CD4-positive, alpha-beta T cell (primary cell): ENCODE measurements at regions of chr11 and their contacts with region 1.

Region 1: DNA sequence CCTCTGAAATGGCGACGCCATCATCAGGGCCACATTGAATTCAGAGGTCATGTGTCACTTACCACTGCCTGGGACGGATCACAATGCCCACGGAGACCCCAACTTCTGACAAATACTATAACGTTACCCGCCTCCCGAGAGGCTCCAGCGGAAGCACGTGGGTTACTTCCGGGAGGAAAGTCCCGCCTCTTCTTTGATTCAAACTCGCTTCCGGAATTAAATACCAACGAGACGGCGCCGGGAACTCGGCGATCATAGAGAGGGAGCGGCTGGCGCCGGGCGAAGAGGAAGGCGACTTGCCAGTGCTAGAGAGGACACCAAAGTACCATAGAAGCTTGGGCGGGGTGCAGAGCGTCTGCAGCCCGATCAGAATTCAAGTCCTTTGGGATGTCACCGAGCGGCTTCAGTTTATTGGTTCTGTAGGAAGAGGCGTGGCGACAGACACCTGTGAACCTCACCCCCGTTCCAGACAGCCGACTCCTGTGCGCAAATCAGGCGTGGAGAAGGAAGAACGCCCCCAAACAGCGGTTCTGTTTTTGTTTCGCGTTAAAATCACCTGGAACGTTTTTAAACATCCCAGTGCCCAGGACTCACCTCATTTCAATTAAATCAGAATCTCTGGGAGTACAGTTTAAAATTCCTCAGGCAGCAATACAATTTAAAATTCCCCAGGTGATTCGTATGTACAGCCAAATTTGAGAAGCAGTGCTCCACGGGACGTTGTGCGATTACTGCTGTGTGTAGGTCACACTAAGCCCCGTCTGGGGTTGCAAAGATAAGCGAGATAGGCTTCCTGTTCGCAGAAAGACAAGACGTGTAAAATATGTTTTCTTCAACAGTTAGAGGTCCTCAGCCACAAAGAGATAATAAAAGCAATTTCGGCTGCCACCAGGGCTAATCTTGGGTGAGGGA is at the start of gene TIMM10:
- DNase-seq: peak; percentile 82 to 99 (median 91)
- ATAC-seq: peak; percentile 91
- H3K4me3 ChIP-seq: peak within 1 kb of the TSS; percentile 85
- H3K4me3 Mint-ChIP-seq: peak within 1 kb of the TSS; percentile 89
- H3K27ac ChIP-seq: peak within 1 kb of the TSS; percentile 78 to 91
- H3K27ac Mint-ChIP-seq: peak within 1 kb of the TSS; percentile 90
- H3K4me1 ChIP-seq: peaks cover 24% of the 10 kb centered on the region
- H3K4me1 Mint-ChIP-seq: peaks cover 25% of the 10 kb centered on the region
- H3K27me3 ChIP-seq: no peaks in the 10 kb centered on the region
- H3K27me3 Mint-ChIP-seq: no peaks in the 10 kb centered on the region
- CTCF ChIP-seq: no peak
- total RNA-seq, gene TIMM10: 28.0 TPM

Region 2: DNA sequence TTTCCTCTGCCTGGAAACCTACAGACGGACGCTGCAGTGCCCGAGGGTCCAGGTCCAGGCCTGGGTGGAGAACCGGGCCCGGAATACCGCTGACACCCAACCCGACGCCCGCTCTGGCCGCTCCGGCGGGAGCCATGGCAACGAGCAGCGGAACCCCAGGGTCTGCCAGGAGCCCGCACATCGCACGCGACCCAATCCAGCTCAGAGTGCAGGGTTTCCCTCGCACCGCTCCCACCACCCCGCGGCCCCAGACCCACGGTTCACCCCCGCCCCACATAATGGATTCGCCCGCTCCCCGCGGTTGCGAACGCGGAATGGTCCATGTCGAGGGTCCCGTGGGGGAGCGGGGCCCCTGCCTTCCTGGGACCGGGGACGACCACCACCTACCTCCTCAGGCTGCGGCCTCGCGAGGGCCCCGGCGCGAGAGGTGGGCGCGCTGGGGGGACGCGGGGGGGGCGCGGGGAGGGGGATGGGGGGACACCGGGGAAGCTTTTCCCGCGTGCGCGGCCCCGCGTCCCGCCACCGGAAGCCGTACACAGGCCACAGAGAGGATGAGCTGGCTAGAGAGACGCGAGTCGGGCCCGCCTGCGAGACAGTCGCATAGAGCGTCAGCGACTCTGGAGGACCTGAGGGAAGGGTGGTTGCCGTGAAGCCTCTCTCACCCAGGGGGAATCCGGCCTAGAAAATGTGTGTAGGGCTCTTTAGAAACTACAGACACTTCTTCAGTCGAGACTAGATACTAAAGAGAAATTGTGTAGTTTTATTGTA is 195.3 kb before region 1 on chr11 and contains the start of gene SSRP1:
- CTCF ChIA-PET with region 1: interaction called, 3 read pairs
- POLR2A ChIA-PET with region 1: interaction called, 3 read pairs
- intact Hi-C with region 1: loop called in 1 of 2 experiments (anchors 2 kb)
- DNase-seq: peak; percentile 77 to 95 (median 86)
- ATAC-seq: peak; percentile 97
- H3K4me3 ChIP-seq: peak within 1 kb of the TSS; percentile 80
- H3K4me3 Mint-ChIP-seq: peak within 1 kb of the TSS; percentile 89
- H3K27ac ChIP-seq: peak within 1 kb of the TSS; percentile 72 to 85
- H3K27ac Mint-ChIP-seq: peak within 1 kb of the TSS; percentile 96
- H3K4me1 ChIP-seq: peaks cover 29% of the 10 kb centered on the region
- H3K4me1 Mint-ChIP-seq: peaks cover 33% of the 10 kb centered on the region
- H3K27me3 ChIP-seq: no peaks in the 10 kb centered on the region
- H3K27me3 Mint-ChIP-seq: no peaks in the 10 kb centered on the region
- CTCF ChIP-seq: no peak
- total RNA-seq, gene SSRP1: 36.7 to 41.2 TPM

Region 3: GRCh38 chr11:57444362-57445121 is 86.3 kb before region 1 on chr11:
- CTCF ChIA-PET with region 1: no interaction called
- POLR2A ChIA-PET with region 1: no interaction called
- intact Hi-C with region 1: no loop called
- DNase-seq: no peak
- ATAC-seq: no peak
- H3K4me3 ChIP-seq: no peak overlapping the region
- H3K4me3 Mint-ChIP-seq: no peak overlapping the region
- H3K27ac ChIP-seq: no peak overlapping the region
- H3K27ac Mint-ChIP-seq: no peak overlapping the region
- H3K4me1 ChIP-seq: no peaks in the 10 kb centered on the region
- H3K4me1 Mint-ChIP-seq: no peaks in the 10 kb centered on the region
- H3K27me3 ChIP-seq: no peaks in the 10 kb centered on the region
- H3K27me3 Mint-ChIP-seq: peaks cover 20% of the 10 kb centered on the region
- CTCF ChIP-seq: no peak

Region 4: GRCh38 chr11:57456960-57457642 is 73.8 kb before region 1 on chr11:
- CTCF ChIA-PET with region 1: interaction called, 26 read pairs
- POLR2A ChIA-PET with region 1: interaction called, 14 read pairs
- intact Hi-C with region 1: loop called (anchors 1 kb)
- DNase-seq: peak; percentile 50 to 85 (median 66)
- ATAC-seq: peak; percentile 62
- H3K4me3 ChIP-seq: no peak overlapping the region
- H3K4me3 Mint-ChIP-seq: peak overlapping the region; percentile 83
- H3K27ac ChIP-seq: no peak overlapping the region
- H3K27ac Mint-ChIP-seq: no peak overlapping the region
- H3K4me1 ChIP-seq: peaks cover 42% of the 10 kb centered on the region
- H3K4me1 Mint-ChIP-seq: peaks cover 32% of the 10 kb centered on the region
- H3K27me3 ChIP-seq: peaks cover 33 to 36% of the 10 kb centered on the region in 2 experiments
- H3K27me3 Mint-ChIP-seq: peaks cover 51% of the 10 kb centered on the region
- CTCF ChIP-seq: peak; percentile 98

Region 5: DNA sequence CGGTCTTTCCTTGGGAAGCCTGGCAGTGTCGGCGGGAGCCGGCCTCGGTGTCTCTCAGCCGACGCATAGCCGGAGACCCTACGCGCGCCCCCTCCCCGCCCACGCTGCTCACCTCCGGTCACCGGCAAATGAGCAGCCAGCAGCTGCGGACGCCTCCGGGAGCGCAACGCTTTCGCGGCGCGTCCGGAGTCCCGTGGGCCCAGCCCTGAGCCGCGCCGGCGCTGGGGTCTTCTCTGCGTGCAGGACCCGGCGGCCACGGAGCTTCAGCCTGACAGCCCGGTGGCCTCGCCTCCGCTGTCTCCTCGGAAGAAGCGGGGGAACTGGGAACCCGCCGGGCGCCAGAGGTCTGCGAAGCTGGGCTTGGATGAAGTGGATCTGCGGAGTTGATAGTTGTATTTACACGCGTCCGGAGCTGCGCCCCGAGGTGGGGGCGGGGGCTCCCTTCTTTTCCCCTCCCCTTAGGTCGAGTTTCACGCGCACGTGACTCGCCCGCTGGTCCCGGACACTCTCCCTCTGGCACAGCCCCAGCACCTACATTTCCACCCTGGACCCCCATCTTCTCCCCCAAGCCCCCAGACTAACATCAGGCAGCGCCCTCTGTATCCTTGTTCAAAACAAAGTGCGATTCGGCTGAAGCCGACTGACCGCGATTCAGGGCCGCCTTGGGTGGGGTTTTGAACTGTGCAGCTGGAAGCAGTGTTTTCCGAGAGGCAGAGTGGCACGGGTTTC is 15.4 kb before region 1 on chr11 and contains the start of gene SLC43A1:
- CTCF ChIA-PET with region 1: interaction called, 19 read pairs
- POLR2A ChIA-PET with region 1: interaction called, 4 read pairs
- intact Hi-C with region 1: no loop called
- DNase-seq: peak in 4 of 14 experiments; percentile 16 to 38 (median 33)
- ATAC-seq: peak; percentile 20
- H3K4me3 ChIP-seq: peak within 1 kb of the TSS; percentile 95
- H3K4me3 Mint-ChIP-seq: peak within 1 kb of the TSS; percentile 98
- H3K27ac ChIP-seq: no peak within 1 kb of the TSS
- H3K27ac Mint-ChIP-seq: peak within 1 kb of the TSS; percentile 42
- H3K4me1 ChIP-seq: peaks cover 32% of the 10 kb centered on the region
- H3K4me1 Mint-ChIP-seq: peaks cover 30% of the 10 kb centered on the region
- H3K27me3 ChIP-seq: no peaks in the 10 kb centered on the region
- H3K27me3 Mint-ChIP-seq: no peaks in the 10 kb centered on the region
- CTCF ChIP-seq: no peak
- total RNA-seq, gene SLC43A1: 3.1 to 4.2 TPM

Region 6: DNA sequence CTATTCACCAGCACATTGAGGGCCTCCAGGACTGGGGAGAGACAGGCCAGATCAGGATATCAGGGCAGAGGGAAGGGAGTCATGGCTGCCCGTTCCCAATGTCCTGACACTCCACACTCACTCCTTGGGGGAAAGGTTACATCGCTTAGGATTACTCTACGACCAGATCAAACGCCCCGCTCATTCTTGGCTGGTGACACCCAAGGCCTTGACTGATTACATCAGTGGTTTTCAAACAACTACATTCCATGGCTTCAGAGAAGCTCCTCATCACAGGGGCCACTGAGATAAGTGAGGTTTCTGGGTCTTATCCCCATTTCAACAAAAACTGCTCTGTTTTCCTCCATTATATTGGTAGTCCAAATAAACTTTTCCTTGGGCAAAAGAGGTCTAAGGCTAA is 21.6 kb after region 1 on chr11:
- CTCF ChIA-PET with region 1: no interaction called
- POLR2A ChIA-PET with region 1: no interaction called
- intact Hi-C with region 1: no loop called
- DNase-seq: no peak
- ATAC-seq: no peak
- H3K4me3 ChIP-seq: no peak overlapping the region
- H3K4me3 Mint-ChIP-seq: no peak overlapping the region
- H3K27ac ChIP-seq: no peak overlapping the region
- H3K27ac Mint-ChIP-seq: no peak overlapping the region
- H3K4me1 ChIP-seq: no peaks in the 10 kb centered on the region
- H3K4me1 Mint-ChIP-seq: peaks cover 6% of the 10 kb centered on the region
- H3K27me3 ChIP-seq: no peaks in the 10 kb centered on the region
- H3K27me3 Mint-ChIP-seq: no peaks in the 10 kb centered on the region
- CTCF ChIP-seq: no peak

Region 7: GRCh38 chr11:57649826-57650738 is 119.2 kb after region 1 on chr11 and contains the start of gene YPEL4:
- CTCF ChIA-PET with region 1: interaction called, 3 read pairs
- POLR2A ChIA-PET with region 1: interaction called, 3 read pairs
- intact Hi-C with region 1: loop called in 1 of 2 experiments (anchors 2 kb)
- DNase-seq: peak; percentile 51 to 92 (median 68)
- ATAC-seq: peak; percentile 83
- H3K4me3 ChIP-seq: peak within 1 kb of the TSS; percentile 53
- H3K4me3 Mint-ChIP-seq: peak within 1 kb of the TSS; percentile 87
- H3K27ac ChIP-seq: no peak within 1 kb of the TSS
- H3K27ac Mint-ChIP-seq: peak within 1 kb of the TSS; percentile 83
- H3K4me1 ChIP-seq: peaks cover 44% of the 10 kb centered on the region
- H3K4me1 Mint-ChIP-seq: peaks cover 49% of the 10 kb centered on the region
- H3K27me3 ChIP-seq: peaks cover 42 to 44% of the 10 kb centered on the region in 2 experiments
- H3K27me3 Mint-ChIP-seq: peaks cover 55% of the 10 kb centered on the region
- CTCF ChIP-seq: no peak
- total RNA-seq, gene YPEL4: 5.6 to 7.3 TPM

Region 8: GRCh38 chr11:57712256-57713150 is 181.7 kb after region 1 on chr11 and contains the start of gene TMX2:
- CTCF ChIA-PET with region 1: interaction called, 3 read pairs
- POLR2A ChIA-PET with region 1: interaction called, 3 read pairs
- intact Hi-C with region 1: loop called (anchors 1 to 2 kb)
- DNase-seq: peak; percentile 79 to 97 (median 84)
- ATAC-seq: peak; percentile 89
- H3K4me3 ChIP-seq: peak within 1 kb of the TSS; percentile 95
- H3K4me3 Mint-ChIP-seq: peak within 1 kb of the TSS; percentile 96
- H3K27ac ChIP-seq: peak within 1 kb of the TSS; percentile 85 to 95
- H3K27ac Mint-ChIP-seq: peak within 1 kb of the TSS; percentile 88
- H3K4me1 ChIP-seq: peaks cover 30% of the 10 kb centered on the region
- H3K4me1 Mint-ChIP-seq: peaks cover 53% of the 10 kb centered on the region
- H3K27me3 ChIP-seq: no peaks in the 10 kb centered on the region
- H3K27me3 Mint-ChIP-seq: no peaks in the 10 kb centered on the region
- CTCF ChIP-seq: no peak
- total RNA-seq, gene TMX2: 30.0 to 30.5 TPM